Activated T-helper 1 cell treated with anti-CD3 and anti-CD28 coated beads, Interleukin-12 subunit alpha, Interleukin-12 subunit beta, Interleukin-2, Interleukin-4 antibody, amounts not matched to agents 30 ng/mL and 10 ng/mL and 1 ng/mL, durations not matched to agents 14 hours and 24 hours and 36 hours (primary cell): ENCODE measurements at regions of chr13 and their contacts with region 1.

Region 1: GRCh38 chr13:39777527-39778061 is 122.1 kb downstream of the COG6 start:
- DNase-seq: peak; percentile 16
- H3K4me3 Mint-ChIP-seq: peak overlapping the region; percentile 45
- H3K27ac Mint-ChIP-seq: peak overlapping the region; percentile 91
- H3K4me1 Mint-ChIP-seq: peaks cover 50% of the 10 kb centered on the region
- H3K27me3 Mint-ChIP-seq: no peaks in the 10 kb centered on the region

Region 2: DNA sequence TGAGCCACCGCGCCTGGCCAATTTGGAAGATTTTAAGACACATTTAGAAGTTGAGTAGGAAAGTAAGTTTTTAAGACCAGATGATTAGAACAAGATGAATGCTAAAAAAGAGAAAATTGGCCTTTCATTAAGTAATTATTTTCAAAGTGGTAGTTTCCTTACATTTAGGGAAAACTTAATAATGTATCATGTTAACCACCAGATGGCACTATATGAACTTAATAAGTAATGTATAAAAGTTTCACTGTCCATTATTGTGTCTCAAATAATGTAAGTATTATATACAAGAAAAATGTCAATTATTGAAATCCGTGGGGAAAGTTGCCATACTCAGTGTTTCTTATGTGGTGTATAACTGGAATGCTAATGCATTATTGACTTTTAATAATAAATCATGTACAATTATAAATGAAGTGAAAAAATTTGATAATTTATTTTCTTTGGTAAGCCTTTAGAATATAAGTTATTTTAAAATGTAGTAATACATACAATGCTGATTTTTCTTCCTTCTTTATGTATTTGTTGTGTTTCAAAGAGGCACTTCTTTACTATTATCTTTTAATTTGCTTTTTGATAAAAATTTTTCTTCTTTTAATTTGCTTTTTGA is 93.0 kb before region 1 on chr13:
- intact Hi-C with region 1: loop called (anchors 1 kb)
- DNase-seq: no peak
- H3K4me3 Mint-ChIP-seq: no peak overlapping the region
- H3K27ac Mint-ChIP-seq: no peak overlapping the region
- H3K4me1 Mint-ChIP-seq: peaks cover 25% of the 10 kb centered on the region
- H3K27me3 Mint-ChIP-seq: no peaks in the 10 kb centered on the region

Region 3: GRCh38 chr13:39956036-39956435 is 178.4 kb after region 1 on chr13:
- intact Hi-C with region 1: loop called (anchors 5 kb)
- DNase-seq: peak; percentile 41
- H3K4me3 Mint-ChIP-seq: peak overlapping the region; percentile 54
- H3K27ac Mint-ChIP-seq: peak overlapping the region; percentile 76
- H3K4me1 Mint-ChIP-seq: peaks cover 38% of the 10 kb centered on the region
- H3K27me3 Mint-ChIP-seq: peaks cover 5% of the 10 kb centered on the region

Region 4: DNA sequence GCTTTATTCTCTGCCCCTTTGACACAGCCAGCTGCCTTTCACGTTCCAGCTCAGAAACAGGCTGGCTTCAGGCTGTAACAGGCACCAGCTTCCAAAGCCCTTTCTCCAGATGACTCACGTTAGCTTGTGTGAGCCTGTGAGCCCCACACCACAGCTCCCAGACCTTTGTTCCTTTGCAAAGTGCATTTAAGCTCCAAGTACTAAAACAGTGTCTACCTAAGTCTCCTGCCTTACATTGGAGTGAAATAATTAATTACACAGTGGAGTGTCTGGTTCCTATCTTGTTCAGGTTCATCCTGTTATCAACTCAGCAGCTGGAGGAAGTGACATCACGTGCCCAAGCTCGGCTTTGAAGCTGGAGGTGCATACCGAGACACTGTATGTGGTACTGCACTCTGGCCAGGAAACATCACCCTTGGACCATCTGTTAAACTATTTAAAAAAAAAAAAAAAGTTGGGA is 413.1 kb after region 1 on chr13:
- intact Hi-C with region 1: loop called (anchors 2 kb)
- DNase-seq: peak; percentile 58
- H3K4me3 Mint-ChIP-seq: peak overlapping the region; percentile 35
- H3K27ac Mint-ChIP-seq: peak overlapping the region; percentile 87
- H3K4me1 Mint-ChIP-seq: peaks cover 66% of the 10 kb centered on the region
- H3K27me3 Mint-ChIP-seq: no peaks in the 10 kb centered on the region

Region 5: GRCh38 chr13:40485611-40486517 is 708.3 kb after region 1 on chr13:
- intact Hi-C with region 1: loop called (anchors 1 kb)
- DNase-seq: peak; percentile 50
- H3K4me3 Mint-ChIP-seq: peak overlapping the region; percentile 23
- H3K27ac Mint-ChIP-seq: peak overlapping the region; percentile 89
- H3K4me1 Mint-ChIP-seq: peaks cover 68% of the 10 kb centered on the region
- H3K27me3 Mint-ChIP-seq: no peaks in the 10 kb centered on the region

Region 6: DNA sequence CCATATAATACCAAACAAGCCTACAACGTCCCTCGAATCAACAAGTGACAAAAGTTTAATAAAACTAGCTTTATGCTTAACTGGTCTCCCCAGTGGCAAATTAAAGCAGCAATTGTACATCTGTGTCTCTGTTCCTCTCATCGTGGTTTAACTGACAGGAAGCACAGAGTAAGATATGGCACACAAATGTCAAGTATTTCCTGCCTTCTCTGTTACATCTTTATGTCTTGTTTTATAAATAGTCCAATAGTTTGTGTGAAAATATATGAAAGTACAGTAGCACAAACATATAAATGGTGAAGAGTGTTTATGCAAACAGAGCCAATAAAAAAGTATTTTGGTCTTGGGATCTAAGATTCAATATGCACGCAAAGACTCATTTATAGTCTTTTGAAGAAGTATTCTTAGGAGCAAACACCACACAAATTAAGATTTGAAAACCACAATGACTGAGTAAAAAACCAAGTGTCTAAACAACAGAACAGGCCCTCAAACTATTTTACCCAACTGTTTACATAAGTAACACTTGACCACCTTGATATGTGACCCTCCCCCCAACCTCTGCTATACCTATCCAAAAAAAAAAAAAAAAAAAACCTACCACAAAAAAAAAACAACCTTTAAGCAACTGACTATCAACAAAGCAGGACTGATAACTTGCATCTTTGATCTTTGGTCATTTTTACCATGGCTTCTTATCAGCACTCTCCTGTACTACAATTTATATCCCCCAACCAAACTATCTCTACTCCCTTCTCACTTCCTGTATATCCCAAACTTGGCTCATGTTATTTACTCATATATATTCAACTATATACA is 1227.5 kb after region 1 on chr13:
- intact Hi-C with region 1: loop called (anchors 2 kb)
- DNase-seq: no peak
- H3K4me3 Mint-ChIP-seq: peak overlapping the region; percentile 59
- H3K27ac Mint-ChIP-seq: peak overlapping the region; percentile 88
- H3K4me1 Mint-ChIP-seq: peaks cover 66% of the 10 kb centered on the region
- H3K27me3 Mint-ChIP-seq: no peaks in the 10 kb centered on the region